Natural killer cell (primary cell): ENCODE measurements at regions of chr19 and their contacts with region 1.

Region 1: DNA sequence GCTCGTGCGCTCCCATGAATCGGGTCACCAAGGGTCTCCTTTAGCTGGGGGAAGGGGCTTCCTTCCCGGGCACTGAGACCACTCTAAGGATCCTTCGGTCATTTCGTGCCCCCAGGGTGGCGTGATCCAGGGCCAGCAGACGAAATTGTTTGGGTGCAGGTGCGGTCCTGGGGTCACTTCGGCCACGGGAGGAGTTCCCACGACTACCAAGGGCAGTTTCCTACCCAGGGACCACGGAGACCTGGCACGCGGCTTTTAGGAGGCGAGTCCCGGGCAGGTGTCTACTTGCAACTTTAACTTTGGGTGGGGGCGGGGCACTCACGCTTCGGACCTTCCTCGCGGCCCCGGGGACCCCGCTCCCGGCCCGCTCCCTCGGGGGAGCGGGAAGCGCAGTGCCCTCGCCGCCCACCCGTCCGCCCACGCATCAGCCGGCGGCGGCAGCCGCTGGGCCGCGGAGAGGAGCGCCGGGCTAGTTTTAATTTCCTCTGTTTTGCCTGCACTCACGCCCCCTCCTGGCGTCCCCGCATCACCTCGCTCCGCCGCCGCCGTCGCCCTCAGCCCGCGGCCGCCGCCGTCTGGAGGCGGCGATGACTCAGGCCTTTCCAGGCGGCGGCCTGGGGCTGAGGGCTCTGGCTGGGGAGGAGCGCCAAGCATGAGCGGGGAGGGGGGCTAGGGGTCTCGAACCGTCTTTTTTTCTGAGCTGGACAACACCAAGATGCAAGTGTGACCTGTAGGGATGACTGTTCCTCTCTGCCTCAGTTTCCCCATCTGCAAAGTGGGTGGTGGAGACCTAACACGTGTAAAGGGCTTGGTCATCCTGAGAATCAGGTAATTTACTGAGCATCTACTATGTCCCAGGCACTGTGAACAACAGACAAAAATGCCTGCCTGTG is 21.8 kb downstream of the OLFM2 start:
- DNase-seq: peak; percentile 76 to 89
- ATAC-seq: peak; percentile 86 to 93 (median 92)
- H3K4me3 ChIP-seq: peak overlapping the region; percentile 19
- H3K4me3 Mint-ChIP-seq: peak overlapping the region; percentile 47
- H3K27ac ChIP-seq: no peak overlapping the region
- H3K27ac Mint-ChIP-seq: no peak overlapping the region
- H3K4me1 ChIP-seq: peaks cover 17% of the 10 kb centered on the region
- H3K4me1 Mint-ChIP-seq: peaks cover 0 to 5% of the 10 kb centered on the region in 2 donors
- H3K27me3 ChIP-seq: peaks cover 21% of the 10 kb centered on the region
- H3K27me3 Mint-ChIP-seq: peaks cover 25 to 27% of the 10 kb centered on the region in 2 donors
- CTCF ChIP-seq: peak; percentile 45

Region 2: GRCh38 chr19:9636018-9636417 is 278.5 kb before region 1 on chr19:
- intact Hi-C with region 1: loop called (anchors 10 kb)
- DNase-seq: no peak
- ATAC-seq: no peak
- H3K4me3 ChIP-seq: no peak overlapping the region
- H3K4me3 Mint-ChIP-seq: no peak overlapping the region
- H3K27ac ChIP-seq: no peak overlapping the region
- H3K27ac Mint-ChIP-seq: no peak overlapping the region
- H3K4me1 ChIP-seq: no peaks in the 10 kb centered on the region
- H3K4me1 Mint-ChIP-seq: peaks cover 1 to 6% of the 10 kb centered on the region in 2 donors
- H3K27me3 ChIP-seq: no peaks in the 10 kb centered on the region
- H3K27me3 Mint-ChIP-seq: no peaks in the 10 kb centered on the region
- CTCF ChIP-seq: no peak

Region 3: GRCh38 chr19:9996541-9996940 is 82.0 kb after region 1 on chr19:
- intact Hi-C with region 1: no loop called
- DNase-seq: no peak
- ATAC-seq: no peak
- H3K4me3 ChIP-seq: no peak overlapping the region
- H3K4me3 Mint-ChIP-seq: no peak overlapping the region
- H3K27ac ChIP-seq: no peak overlapping the region
- H3K27ac Mint-ChIP-seq: no peak overlapping the region
- H3K4me1 ChIP-seq: peaks cover 5% of the 10 kb centered on the region
- H3K4me1 Mint-ChIP-seq: peaks cover 8% of the 10 kb centered on the region in 2 donors
- H3K27me3 ChIP-seq: peaks cover 3% of the 10 kb centered on the region
- H3K27me3 Mint-ChIP-seq: peaks cover 17 to 20% of the 10 kb centered on the region in 2 donors
- CTCF ChIP-seq: no peak

Region 4: GRCh38 chr19:10010247-10010691 is 95.7 kb after region 1 on chr19 and contains the start of gene COL5A3:
- intact Hi-C with region 1: no loop called
- DNase-seq: no peak
- ATAC-seq: peak in 1 of 3 donors; percentile 10
- H3K4me3 ChIP-seq: no peak within 1 kb of the TSS
- H3K4me3 Mint-ChIP-seq: peak within 1 kb of the TSS; percentile 35
- H3K27ac ChIP-seq: no peak within 1 kb of the TSS
- H3K27ac Mint-ChIP-seq: peak within 1 kb of the TSS in 1 of 2 donors; percentile 15
- H3K4me1 ChIP-seq: peaks cover 49% of the 10 kb centered on the region
- H3K4me1 Mint-ChIP-seq: peaks cover 33 to 51% of the 10 kb centered on the region in 2 donors
- H3K27me3 ChIP-seq: peaks cover 16% of the 10 kb centered on the region
- H3K27me3 Mint-ChIP-seq: peaks cover 33 to 36% of the 10 kb centered on the region in 2 donors
- CTCF ChIP-seq: no peak
- total RNA-seq, gene COL5A3: 0.33 to 6.6 (median 0.63) TPM

Region 5: GRCh38 chr19:10454267-10454666 is 539.7 kb after region 1 on chr19:
- intact Hi-C with region 1: no loop called
- DNase-seq: no peak
- ATAC-seq: no peak
- H3K4me3 ChIP-seq: no peak overlapping the region
- H3K4me3 Mint-ChIP-seq: no peak overlapping the region
- H3K27ac ChIP-seq: no peak overlapping the region
- H3K27ac Mint-ChIP-seq: no peak overlapping the region
- H3K4me1 ChIP-seq: no peaks in the 10 kb centered on the region
- H3K4me1 Mint-ChIP-seq: peaks cover 9% of the 10 kb centered on the region in 2 donors
- H3K27me3 ChIP-seq: no peaks in the 10 kb centered on the region
- H3K27me3 Mint-ChIP-seq: no peaks in the 10 kb centered on the region
- CTCF ChIP-seq: no peak